Ovary (tissue), 10 donors: ENCODE measurements at regions of chr13 and their contacts with region 1.

Region 1: GRCh38 chr13:78977311-78977710 is 318.4 kb upstream of the OBI1 start:
- DNase-seq: no peak
- H3K4me3 ChIP-seq: no peak overlapping the region
- H3K27ac ChIP-seq: no peak overlapping the region
- H3K4me1 ChIP-seq: no peaks in the 10 kb centered on the region
- H3K27me3 ChIP-seq: no peaks in the 10 kb centered on the region
- CTCF ChIP-seq: no peak
- EP300 ChIP-seq: no peak
- POLR2A ChIP-seq: no peak

Region 2: GRCh38 chr13:78143331-78143730 is 834.0 kb before region 1 on chr13:
- intact Hi-C with region 1: loop called in 1 of 4 experiments (anchors 2 kb)
- DNase-seq: no peak
- H3K4me3 ChIP-seq: no peak overlapping the region
- H3K27ac ChIP-seq: no peak overlapping the region
- H3K4me1 ChIP-seq: no peaks in the 10 kb centered on the region
- H3K27me3 ChIP-seq: no peaks in the 10 kb centered on the region
- CTCF ChIP-seq: no peak
- EP300 ChIP-seq: no peak
- POLR2A ChIP-seq: no peak

Region 3: GRCh38 chr13:78576261-78576660 is 401.1 kb before region 1 on chr13:
- intact Hi-C with region 1: no loop called
- DNase-seq: no peak
- H3K4me3 ChIP-seq: no peak overlapping the region
- H3K27ac ChIP-seq: no peak overlapping the region
- H3K4me1 ChIP-seq: no peaks in the 10 kb centered on the region
- H3K27me3 ChIP-seq: no peaks in the 10 kb centered on the region
- CTCF ChIP-seq: no peak
- EP300 ChIP-seq: no peak
- POLR2A ChIP-seq: no peak